Dendritic cell treated with granulocyte-macrophage colony-stimulating factor and Interleukin-4, amounts not matched to agents 40 ng/mL and 50 ng/mL, for 4 days (primary cell): ENCODE measurements at regions of chr1 and their contacts with region 1.

Region 1: DNA sequence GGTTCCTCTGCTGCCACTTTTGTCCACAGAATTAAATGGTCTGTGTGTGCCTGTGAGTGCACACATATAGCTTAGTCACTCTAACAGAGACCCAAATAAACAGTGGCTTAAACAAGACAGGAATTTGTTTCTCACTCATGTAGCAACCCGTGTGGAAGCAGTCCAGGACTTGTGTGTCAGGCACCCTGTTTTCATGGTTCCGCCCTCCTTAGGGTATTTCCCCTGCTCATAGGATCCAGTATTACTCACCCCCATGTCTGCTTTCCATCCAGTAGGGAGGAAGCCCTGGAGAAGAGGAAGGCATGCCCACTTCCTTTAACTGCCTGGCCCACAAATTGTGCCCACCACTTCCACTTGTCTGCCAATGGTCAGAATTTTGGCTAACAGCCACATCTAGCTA is 41.3 kb upstream of the TACSTD2 start:
- H3K4me3 Mint-ChIP-seq: no peak overlapping the region
- H3K27ac Mint-ChIP-seq: peak overlapping the region; percentile 68
- H3K4me1 Mint-ChIP-seq: peaks cover 48% of the 10 kb centered on the region
- H3K27me3 Mint-ChIP-seq: peaks cover 5% of the 10 kb centered on the region

Region 2: DNA sequence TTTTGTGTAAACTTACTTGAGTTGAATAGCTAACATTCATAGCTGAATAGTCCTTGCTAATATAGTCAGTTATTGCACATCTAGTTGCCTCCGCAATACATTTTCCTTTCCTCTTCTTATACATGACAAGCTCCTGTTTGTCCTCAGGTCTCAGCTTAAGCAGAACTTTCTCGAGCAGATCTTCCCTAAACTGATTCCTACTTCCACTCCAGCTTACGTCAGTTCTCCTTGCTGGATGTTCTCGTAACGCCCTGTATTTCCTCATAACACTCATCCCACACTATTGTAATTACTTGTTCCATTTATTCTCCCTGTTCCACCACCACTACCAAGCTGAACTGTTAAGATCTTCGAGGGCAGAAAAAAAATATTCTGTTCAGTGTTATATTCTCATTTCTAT is 56.7 kb before region 1 on chr1:
- intact Hi-C with region 1: loop called (anchors 5 kb)
- H3K4me3 Mint-ChIP-seq: no peak overlapping the region
- H3K27ac Mint-ChIP-seq: peak overlapping the region; percentile 14
- H3K4me1 Mint-ChIP-seq: peaks cover 7% of the 10 kb centered on the region
- H3K27me3 Mint-ChIP-seq: peaks cover 7% of the 10 kb centered on the region

Region 3: GRCh38 chr1:58584082-58584895 is 34.0 kb before region 1 on chr1:
- intact Hi-C with region 1: loop called (anchors 5 kb)
- H3K4me3 Mint-ChIP-seq: no peak overlapping the region
- H3K27ac Mint-ChIP-seq: no peak overlapping the region
- H3K4me1 Mint-ChIP-seq: peaks cover 24% of the 10 kb centered on the region
- H3K27me3 Mint-ChIP-seq: peaks cover 15% of the 10 kb centered on the region

Region 4: GRCh38 chr1:58768971-58769808 is 150.9 kb after region 1 on chr1:
- intact Hi-C with region 1: no loop called
- H3K4me3 Mint-ChIP-seq: no peak overlapping the region
- H3K27ac Mint-ChIP-seq: no peak overlapping the region
- H3K4me1 Mint-ChIP-seq: peaks cover 26% of the 10 kb centered on the region
- H3K27me3 Mint-ChIP-seq: peaks cover 2% of the 10 kb centered on the region